ENCODE measurements at regions of chr21 and their contacts with region 1.

Region 1: DNA sequence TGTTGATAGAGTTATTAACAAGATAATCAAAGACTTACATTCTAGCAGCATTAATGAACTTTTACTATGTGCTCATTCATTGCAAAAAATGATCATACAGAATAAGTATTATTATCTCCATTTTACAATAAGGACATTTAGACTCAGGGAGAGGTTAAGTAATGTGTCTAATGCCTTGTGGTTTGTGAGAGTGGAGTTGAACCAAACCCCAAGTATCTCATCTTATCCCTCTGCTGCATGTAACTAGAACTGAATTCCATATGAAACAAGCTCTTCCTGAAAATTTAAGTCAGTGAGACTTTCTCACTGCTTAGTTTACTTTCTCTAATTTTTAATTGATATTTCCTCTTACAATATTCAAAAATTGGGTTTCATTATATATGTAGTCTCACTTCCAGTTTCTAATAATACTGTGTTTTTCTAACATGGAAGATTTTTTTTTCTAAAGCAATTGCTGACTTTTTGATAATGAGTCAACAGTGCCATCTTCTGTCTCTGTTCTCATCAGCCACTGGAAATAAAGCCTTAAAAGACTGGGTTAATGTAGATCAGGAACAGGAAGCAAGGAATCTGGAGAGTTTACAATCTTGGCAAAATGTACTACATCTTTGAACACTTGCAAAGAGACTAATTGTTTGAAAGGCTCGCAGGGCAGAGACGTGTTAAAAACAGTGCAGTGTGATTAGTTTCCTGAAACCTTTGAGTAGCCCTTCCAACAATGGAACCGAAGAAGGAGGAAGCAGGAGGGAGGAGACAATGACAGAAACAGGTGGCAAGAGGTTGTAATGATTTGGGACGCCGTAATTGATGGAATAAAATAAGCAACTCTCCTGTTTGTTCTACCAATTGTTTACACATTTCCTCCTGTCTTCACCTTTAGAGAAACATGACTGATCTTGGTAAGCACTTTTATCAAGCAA is 567.6 kb downstream of the MRPL39 start:
- DNase-seq: no peak
- H3K4me3 ChIP-seq: no peak overlapping the region
- H3K27ac ChIP-seq: no peak overlapping the region
- H3K4me1 ChIP-seq: no peaks in the 10 kb centered on the region
- H3K27me3 ChIP-seq: no peaks in the 10 kb centered on the region
- CTCF ChIP-seq: no peak

Region 2: DNA sequence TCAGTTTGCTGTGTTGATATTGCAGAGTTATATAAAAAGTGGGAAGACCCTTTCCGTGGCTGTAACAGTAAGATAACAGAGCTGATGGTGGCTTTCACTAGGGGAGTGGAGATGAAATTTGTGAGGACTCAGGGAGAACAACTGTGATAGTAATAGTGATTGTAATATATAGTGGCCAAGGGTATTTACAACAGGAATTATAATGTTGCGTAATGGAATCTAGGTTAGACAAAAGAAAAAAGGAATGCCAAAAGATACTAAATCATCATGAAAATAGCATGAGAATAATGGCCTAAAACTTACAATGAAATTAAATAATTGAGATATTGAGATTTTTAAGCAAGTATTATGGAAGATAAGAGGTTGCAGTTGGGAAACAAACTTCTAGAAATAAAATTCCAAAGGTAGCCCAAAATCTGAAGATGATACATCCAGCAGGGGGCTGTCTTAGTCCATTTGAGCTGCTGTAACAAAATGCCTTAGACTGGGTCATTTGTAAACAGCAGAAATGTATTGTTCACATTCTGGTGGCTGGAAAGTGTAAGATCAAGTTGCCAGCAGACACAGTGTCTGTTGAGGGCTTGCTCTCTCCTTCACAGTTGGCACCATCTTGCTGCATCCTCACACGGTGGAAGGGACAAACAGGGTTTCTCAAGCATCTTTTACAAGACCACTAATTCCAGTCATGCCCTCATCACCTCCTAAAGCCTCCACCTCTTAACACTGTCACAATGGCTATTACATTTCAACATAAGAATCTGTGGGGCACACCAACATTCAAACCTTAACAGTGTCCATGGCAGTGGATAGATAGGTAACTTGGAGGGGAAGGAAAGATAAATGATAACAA is 143.6 kb before region 1 on chr21:
- intact Hi-C with region 1: loop called (anchors 10 kb)
- DNase-seq: no peak
- H3K4me3 ChIP-seq: no peak overlapping the region
- H3K27ac ChIP-seq: no peak overlapping the region
- H3K4me1 ChIP-seq: no peaks in the 10 kb centered on the region
- H3K27me3 ChIP-seq: no peaks in the 10 kb centered on the region
- CTCF ChIP-seq: no peak

Region 3: DNA sequence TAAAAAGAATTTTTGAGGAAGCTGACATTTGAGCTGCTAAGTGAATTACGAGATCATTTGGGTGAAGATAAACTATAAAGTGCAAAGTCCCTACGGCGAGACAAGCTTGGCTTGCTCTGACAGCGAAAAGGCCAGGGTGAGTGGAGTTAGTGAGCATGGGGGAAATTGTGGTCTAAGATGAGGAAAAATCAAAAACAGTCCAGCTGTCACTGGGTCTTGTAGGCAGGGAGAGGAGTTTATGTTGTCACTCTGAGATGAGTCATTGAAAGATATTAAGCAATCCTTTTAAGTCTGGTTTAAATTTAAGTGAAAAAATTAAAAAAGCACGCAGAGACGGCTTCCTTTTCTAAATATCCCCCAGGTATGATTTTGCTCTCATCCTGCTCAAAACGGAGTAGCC is 34.3 kb before region 1 on chr21:
- intact Hi-C with region 1: no loop called
- DNase-seq: no peak
- H3K4me3 ChIP-seq: no peak overlapping the region
- H3K27ac ChIP-seq: no peak overlapping the region
- H3K4me1 ChIP-seq: no peaks in the 10 kb centered on the region
- H3K27me3 ChIP-seq: no peaks in the 10 kb centered on the region
- CTCF ChIP-seq: no peak

Measured in colonic mucosa (tissue), 4 donors.